ENCODE measurements at regions of chr14 and their contacts with region 1.

Region 1: DNA sequence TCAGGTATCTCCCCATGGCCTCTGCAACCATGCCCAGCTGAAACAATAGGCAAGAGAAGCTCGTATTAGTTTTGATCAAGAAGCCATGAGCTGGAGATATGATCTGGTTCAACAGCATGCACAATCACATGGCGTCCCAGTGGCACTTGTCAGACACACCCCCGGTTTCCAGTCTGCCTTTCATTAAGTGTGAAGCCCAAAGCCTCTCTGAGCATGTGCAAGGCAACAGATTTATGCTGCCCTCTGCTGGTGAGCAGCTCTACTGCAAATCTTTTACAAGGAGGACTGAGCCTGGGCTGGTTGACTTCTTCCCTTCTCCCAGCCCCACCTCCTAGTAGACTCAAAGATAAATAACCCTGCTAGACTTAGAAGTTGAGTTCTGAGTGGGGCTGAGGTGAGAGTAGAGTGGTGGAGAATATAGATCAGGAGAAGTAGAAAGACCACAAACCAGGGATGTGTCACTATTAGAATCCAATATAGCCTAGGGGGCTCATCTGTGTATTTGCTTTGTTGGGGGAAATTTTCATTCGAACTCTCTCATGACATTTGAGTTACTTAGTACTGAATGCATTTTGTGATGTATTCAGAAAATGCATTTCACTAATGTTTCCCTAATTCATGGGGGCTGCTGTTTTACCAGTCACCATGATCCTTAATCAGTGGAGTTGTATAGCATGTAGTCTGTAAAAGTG is 53.7 kb upstream of the MBIP start:
- H3K4me3 ChIP-seq: no peak overlapping the region
- H3K27ac ChIP-seq: no peak overlapping the region
- H3K4me1 ChIP-seq: no peaks in the 10 kb centered on the region
- CTCF ChIP-seq: 0 out of 2 replicates have a peak, but pooled peaks have one; percentile 25

Region 2: DNA sequence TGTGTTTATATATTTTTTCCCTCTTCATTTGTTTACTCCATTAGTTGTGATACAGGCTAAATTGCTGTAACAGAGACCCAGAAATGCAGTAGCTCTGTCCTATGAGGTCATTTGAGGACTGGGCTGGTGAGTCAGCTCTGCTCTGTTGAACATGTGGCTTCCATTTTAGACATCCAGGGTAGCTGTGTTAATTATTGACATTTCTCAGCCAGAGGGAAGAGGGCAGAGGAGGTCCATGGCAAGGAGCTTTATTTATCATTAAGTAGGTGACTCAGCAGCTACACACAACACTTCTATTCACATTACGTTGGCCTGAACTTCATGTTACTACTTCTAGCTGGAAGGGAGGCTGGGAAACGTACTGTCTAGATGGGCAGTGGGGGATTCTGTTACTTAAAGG is 283.0 kb before region 1 on chr14:
- CTCF ChIA-PET with region 1: interaction called, 13 read pairs
- POLR2A ChIA-PET with region 1: no interaction called
- H3K4me3 ChIP-seq: no peak overlapping the region
- H3K27ac ChIP-seq: no peak overlapping the region
- H3K4me1 ChIP-seq: peaks cover 6% of the 10 kb centered on the region; the same call in 1 of the 2 replicates
- CTCF ChIP-seq: no peak

Region 3: DNA sequence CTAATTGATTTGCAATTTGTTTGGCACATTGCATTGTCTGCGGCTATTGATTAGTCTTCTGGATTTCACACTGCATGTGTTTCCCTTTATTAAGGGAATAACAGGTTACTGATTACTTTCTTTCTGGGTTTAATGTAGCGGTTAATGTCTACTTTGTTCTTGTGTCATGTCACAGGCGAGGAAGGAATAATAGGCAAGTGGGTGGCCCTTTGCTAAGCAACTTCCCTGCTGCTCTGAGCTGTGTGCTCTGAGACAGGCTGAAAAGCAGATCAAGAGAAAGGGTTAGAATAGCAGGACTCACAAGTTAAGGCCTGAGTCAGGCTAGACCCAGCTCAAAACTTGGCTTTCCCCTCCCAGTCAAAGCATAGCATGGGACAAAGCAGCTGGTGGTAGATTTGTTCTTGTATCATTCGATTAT is 68.7 kb after region 1 on chr14:
- CTCF ChIA-PET with region 1: no interaction called
- POLR2A ChIA-PET with region 1: no interaction called
- H3K4me3 ChIP-seq: no peak overlapping the region
- H3K27ac ChIP-seq: no peak overlapping the region
- H3K4me1 ChIP-seq: no peaks in the 10 kb centered on the region
- CTCF ChIP-seq: no peak